ENCODE measurements at regions of chr9 and their contacts with region 1.

Region 1: DNA sequence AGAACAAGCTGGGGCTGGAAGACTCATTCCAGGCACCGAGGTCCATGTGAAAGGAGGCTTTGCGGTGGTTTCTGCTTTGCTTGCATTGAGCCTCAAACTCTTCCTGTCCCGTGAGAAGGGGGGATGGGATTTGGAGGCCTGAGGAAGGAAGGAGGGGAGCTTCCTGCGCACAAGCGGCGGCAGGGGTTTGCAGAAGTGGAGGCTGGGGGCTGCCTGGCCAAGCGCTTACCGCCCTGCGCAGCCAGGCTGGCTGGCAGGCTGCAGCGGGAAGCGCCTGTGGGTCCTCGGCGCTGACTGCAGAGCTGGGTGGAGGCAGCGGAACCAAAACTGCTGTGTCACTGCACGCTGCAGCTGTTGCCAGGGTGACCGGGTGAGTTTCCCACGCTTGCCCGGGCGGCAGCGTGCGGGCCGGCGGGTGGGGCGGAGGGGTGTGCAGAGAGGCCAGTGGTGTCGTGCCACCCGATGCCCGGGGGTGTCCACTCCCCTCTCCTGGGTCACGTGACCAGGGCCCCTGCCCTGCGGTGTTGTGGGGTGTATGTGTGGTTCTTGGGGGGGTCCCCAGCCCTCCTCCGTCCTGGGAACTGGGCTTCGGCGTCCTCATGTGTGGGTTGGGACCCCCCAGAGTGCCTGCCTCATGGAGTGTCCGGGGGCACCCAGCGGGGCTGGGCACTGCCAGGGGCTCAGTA is 81.0 kb downstream of the RXRA start:
- DNase-seq: peak; percentile 90
- H3K4me3 Mint-ChIP-seq: peak overlapping the region; percentile 58
- H3K27ac Mint-ChIP-seq: peak overlapping the region; percentile 82
- H3K4me1 Mint-ChIP-seq: peaks cover 41% of the 10 kb centered on the region
- H3K27me3 Mint-ChIP-seq: peaks cover 72% of the 10 kb centered on the region

Region 2: GRCh38 chr9:134158753-134159392 is 248.4 kb before region 1 on chr9:
- CTCF ChIA-PET with region 1: no interaction called
- DNase-seq: no peak
- H3K4me3 Mint-ChIP-seq: no peak overlapping the region
- H3K27ac Mint-ChIP-seq: no peak overlapping the region
- H3K4me1 Mint-ChIP-seq: peaks cover 11% of the 10 kb centered on the region
- H3K27me3 Mint-ChIP-seq: peaks cover 3% of the 10 kb centered on the region

Region 3: DNA sequence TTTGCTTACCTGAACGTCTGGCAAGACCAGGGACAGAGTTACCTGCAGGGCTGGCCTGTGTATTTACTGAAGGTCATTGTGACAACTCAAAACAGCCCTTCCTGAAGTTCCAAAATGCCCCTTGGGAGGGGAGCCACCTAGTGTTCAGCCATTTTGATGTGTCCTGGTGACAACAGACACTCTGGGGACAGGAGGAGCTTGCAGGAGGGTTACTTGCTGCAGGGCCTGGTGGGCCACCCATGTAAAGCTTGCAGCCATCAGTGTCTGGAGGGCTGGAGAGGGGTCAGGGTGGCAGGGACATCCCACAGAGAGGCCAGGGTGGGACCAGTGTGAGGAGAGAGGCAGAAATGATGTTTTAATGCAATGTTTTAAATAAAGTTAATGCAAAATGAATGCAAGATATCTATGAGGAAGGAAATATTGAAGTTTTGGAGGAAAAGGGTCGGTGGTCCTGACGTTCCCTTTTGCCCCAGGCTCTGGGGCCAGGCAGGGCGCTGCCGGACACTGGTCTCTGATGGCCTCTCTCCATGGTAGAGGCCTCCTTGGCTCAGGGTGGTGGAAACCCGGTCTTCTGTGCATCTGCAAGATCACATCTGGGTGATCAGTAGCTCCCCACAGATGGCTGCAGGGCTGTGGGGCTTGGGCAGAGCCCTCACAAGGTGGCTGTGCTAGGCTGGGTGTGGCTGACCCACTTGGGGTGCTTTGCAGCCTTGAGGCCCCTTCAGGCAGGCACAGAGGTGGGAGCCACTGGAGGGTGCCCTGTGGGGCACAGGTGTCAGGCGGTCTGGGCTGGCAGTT is 189.2 kb before region 1 on chr9:
- CTCF ChIA-PET with region 1: no interaction called
- DNase-seq: peak; percentile 42
- H3K4me3 Mint-ChIP-seq: no peak overlapping the region
- H3K27ac Mint-ChIP-seq: no peak overlapping the region
- H3K4me1 Mint-ChIP-seq: no peaks in the 10 kb centered on the region
- H3K27me3 Mint-ChIP-seq: no peaks in the 10 kb centered on the region

Region 4: GRCh38 chr9:134236001-134236421 is 171.3 kb before region 1 on chr9:
- CTCF ChIA-PET with region 1: no interaction called
- DNase-seq: no peak
- H3K4me3 Mint-ChIP-seq: no peak overlapping the region
- H3K27ac Mint-ChIP-seq: no peak overlapping the region
- H3K4me1 Mint-ChIP-seq: no peaks in the 10 kb centered on the region
- H3K27me3 Mint-ChIP-seq: peaks cover 12% of the 10 kb centered on the region

Region 5: DNA sequence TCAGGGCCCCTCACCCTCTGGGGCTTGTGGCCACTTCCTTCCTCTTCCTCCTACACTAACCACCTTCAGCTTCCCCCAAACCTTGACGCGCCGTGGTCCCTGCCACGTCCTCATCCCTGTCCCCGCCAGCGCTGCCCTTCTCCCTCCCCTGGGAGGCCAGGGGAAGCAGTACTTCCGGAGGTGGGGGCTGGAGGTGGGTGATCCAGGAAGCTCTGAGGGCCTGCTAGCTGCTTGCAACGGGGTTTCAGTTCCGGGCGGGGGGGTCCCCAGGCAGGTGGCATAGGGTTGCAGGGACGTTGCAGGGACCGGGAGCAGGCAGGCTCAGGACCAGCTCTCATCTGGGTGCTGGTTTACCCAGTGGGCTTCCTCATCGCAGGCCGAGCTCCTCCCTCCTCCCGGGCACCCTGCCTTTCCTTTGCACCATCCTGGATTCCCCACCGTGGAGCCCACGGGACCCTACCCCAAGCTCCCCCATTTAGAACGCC is 11.0 kb before region 1 on chr9:
- CTCF ChIA-PET with region 1: interaction called, 10 read pairs
- DNase-seq: peak; percentile 71
- H3K4me3 Mint-ChIP-seq: peak overlapping the region; percentile 68
- H3K27ac Mint-ChIP-seq: peak overlapping the region; percentile 84
- H3K4me1 Mint-ChIP-seq: peaks cover 58% of the 10 kb centered on the region
- H3K27me3 Mint-ChIP-seq: peaks cover 46% of the 10 kb centered on the region

Measured in activated naive CD4-positive, alpha-beta T cell treated with anti-CD3 and anti-CD28 coated beads, Interleukin-2, amount 10 ng/mL, durations not matched to agents 7 days and 5 days (primary cell).